Activated CD8-positive, alpha-beta T cell treated with anti-CD3 and anti-CD28 coated beads for 36 hours (primary cell): ENCODE measurements at regions of chr18 and their contacts with region 1.

Region 1: GRCh38 chr18:42114310-42114943 is 159.4 kb downstream of the PIK3C3 start:
- DNase-seq: peak; percentile 74
- ATAC-seq: peak; percentile 79
- H3K4me3 Mint-ChIP-seq: no peak overlapping the region
- H3K27ac Mint-ChIP-seq: peak overlapping the region; percentile 34
- H3K4me1 Mint-ChIP-seq: peaks cover 8% of the 10 kb centered on the region
- H3K27me3 Mint-ChIP-seq: peaks cover 5% of the 10 kb centered on the region
- CTCF ChIP-seq: peak; percentile 79

Region 2: GRCh38 chr18:42100911-42101310 is 13.5 kb before region 1 on chr18:
- CTCF ChIA-PET with region 1: interaction called, 28 read pairs
- POLR2A ChIA-PET with region 1: no interaction called
- intact Hi-C with region 1: no loop called
- DNase-seq: no peak
- ATAC-seq: peak; percentile 49
- H3K4me3 Mint-ChIP-seq: no peak overlapping the region
- H3K27ac Mint-ChIP-seq: no peak overlapping the region
- H3K4me1 Mint-ChIP-seq: no peaks in the 10 kb centered on the region
- H3K27me3 Mint-ChIP-seq: peaks cover 2% of the 10 kb centered on the region
- CTCF ChIP-seq: no peak

Region 3: DNA sequence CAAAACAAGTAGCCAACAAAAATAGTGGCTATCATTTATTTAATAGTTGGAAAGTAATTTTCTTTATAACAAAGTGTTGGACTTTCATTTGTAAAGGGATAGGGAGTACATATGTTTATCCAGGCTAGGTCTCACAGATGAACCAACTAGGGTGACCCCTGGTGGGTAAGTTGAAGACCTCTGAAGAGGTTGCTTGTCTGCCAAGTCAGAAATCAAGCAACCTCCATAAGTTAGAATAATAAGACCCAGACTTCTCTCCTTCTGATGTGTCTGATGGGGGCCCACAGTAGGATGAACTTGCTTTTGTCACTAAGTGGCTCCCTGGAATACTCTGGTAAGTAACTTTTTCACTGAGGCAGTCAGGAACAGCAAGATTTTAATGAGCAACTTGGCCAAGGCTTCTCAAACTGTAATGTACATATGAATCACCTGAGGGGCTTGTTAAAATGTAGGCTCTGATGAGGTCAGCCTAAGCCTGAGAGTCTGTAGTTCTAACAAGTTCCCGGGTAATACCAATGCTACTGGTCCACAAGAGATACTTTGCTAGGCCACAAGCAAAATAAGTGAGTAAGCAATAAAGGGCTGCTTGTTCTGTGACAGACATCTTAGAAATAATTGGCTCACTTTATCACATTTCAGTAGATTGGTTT is 160.2 kb after region 1 on chr18:
- CTCF ChIA-PET with region 1: interaction called, 8 read pairs
- POLR2A ChIA-PET with region 1: no interaction called
- intact Hi-C with region 1: loop called (anchors 5 kb)
- DNase-seq: peak; percentile 4
- ATAC-seq: no peak
- H3K4me3 Mint-ChIP-seq: no peak overlapping the region
- H3K27ac Mint-ChIP-seq: no peak overlapping the region
- H3K4me1 Mint-ChIP-seq: no peaks in the 10 kb centered on the region
- H3K27me3 Mint-ChIP-seq: no peaks in the 10 kb centered on the region
- CTCF ChIP-seq: no peak

Region 4: DNA sequence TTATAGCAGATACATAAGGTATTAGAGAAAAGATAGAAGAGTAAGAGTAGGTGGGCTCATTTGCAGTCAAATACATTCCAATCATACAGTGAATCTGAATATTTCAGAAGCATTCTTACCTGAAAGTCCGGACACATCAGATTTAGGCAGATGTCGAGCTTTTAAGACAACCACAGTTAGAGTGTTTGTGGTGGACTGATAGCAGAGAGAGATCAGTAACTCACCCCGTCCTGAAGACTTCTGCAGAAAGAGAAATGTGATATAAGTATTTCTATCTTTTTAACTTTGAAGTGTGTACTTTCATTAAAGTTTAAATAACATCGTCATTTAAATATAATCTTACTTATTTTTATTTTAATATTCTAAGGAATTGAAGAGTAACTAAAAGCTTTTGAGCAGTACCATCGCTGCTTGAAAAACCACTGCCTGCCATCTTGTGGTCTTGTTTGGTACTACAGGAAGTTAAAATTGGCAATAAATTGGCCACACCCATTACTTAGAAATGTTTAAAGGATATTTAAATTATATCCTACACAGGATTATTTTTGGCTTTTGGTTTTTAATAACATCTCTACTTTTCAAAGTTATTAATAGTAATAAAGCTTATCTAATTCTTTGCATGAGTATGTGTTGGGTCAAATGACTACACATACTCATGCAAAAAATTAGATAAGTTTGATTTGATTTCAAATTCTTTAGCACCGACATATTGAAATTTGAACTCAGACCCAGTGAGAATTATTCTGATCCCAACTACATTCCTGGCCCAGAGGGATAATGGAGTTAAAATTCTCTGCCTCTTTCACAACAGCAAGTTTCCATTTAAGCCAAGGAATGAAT is 1157.4 kb after region 1 on chr18:
- CTCF ChIA-PET with region 1: interaction called, 31 read pairs
- POLR2A ChIA-PET with region 1: no interaction called
- intact Hi-C with region 1: loop called (anchors 5 kb)
- DNase-seq: peak; percentile 17
- ATAC-seq: peak; percentile 56
- H3K4me3 Mint-ChIP-seq: no peak overlapping the region
- H3K27ac Mint-ChIP-seq: no peak overlapping the region
- H3K4me1 Mint-ChIP-seq: no peaks in the 10 kb centered on the region
- H3K27me3 Mint-ChIP-seq: no peaks in the 10 kb centered on the region
- CTCF ChIP-seq: peak; percentile 79